CD14-positive monocyte (primary cell): ENCODE measurements at regions of chr5 and their contacts with region 1.

Region 1: GRCh38 chr5:173057062-173057924 is 1.1 kb downstream of the CREBRF start:
- DNase-seq: peak; percentile 98 to 99 (median 99)
- H3K4me3 ChIP-seq: peak overlapping the region; percentile 57 to 97 (median 96)
- H3K4me3 Mint-ChIP-seq: peak overlapping the region; percentile 90 to 94
- H3K27ac ChIP-seq: peak overlapping the region; percentile 83 to 95
- H3K27ac Mint-ChIP-seq: peak overlapping the region; percentile 93 to 98 (median 97)
- H3K4me1 ChIP-seq: peaks cover 21 to 26% of the 10 kb centered on the region in 2 donors
- H3K4me1 Mint-ChIP-seq: peaks cover 21% of the 10 kb centered on the region
- H3K27me3 ChIP-seq: no peaks in the 10 kb centered on the region
- H3K27me3 Mint-ChIP-seq: peaks cover 0 to 3% (median 0%) of the 10 kb centered on the region in 3 donors
- CTCF ChIP-seq: no peak

Region 2: DNA sequence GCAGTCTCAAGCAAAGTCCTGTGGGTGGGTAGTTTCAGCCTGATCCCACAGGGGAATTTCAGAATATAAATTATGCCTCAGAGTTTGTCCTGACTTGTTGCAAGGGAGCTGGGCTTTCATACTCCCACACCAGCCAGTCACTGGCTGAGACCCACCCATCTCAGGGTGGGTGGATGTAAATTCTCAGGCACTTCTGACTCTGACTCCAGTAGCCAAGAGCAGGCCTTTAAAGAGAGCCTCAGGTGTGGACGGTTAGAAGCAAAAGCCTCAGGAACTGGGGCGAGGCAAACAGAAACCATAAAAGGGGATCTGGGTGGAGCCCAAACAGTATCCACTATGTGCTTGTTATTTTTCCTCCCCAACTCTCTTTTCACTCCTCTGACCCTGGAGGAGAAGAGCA is 1022.3 kb before region 1 on chr5:
- intact Hi-C with region 1: no loop called
- DNase-seq: no peak
- H3K4me3 ChIP-seq: no peak overlapping the region
- H3K4me3 Mint-ChIP-seq: peak overlapping the region in 1 of 2 donors; percentile 12
- H3K27ac ChIP-seq: no peak overlapping the region
- H3K27ac Mint-ChIP-seq: no peak overlapping the region
- H3K4me1 ChIP-seq: peaks cover 7 to 8% of the 10 kb centered on the region in 2 donors
- H3K4me1 Mint-ChIP-seq: peaks cover 11% of the 10 kb centered on the region
- H3K27me3 ChIP-seq: no peaks in the 10 kb centered on the region
- H3K27me3 Mint-ChIP-seq: peaks cover 0 to 3% (median 2%) of the 10 kb centered on the region in 3 donors
- CTCF ChIP-seq: no peak

Region 3: GRCh38 chr5:172543484-172544298 is 513.6 kb before region 1 on chr5:
- intact Hi-C with region 1: no loop called
- DNase-seq: no peak
- H3K4me3 ChIP-seq: no peak overlapping the region
- H3K4me3 Mint-ChIP-seq: no peak overlapping the region
- H3K27ac ChIP-seq: no peak overlapping the region
- H3K27ac Mint-ChIP-seq: no peak overlapping the region
- H3K4me1 ChIP-seq: no peaks in the 10 kb centered on the region
- H3K4me1 Mint-ChIP-seq: no peaks in the 10 kb centered on the region
- H3K27me3 ChIP-seq: no peaks in the 10 kb centered on the region
- H3K27me3 Mint-ChIP-seq: peaks cover 1 to 8% (median 7%) of the 10 kb centered on the region in 3 donors
- CTCF ChIP-seq: no peak

Region 4: GRCh38 chr5:172886974-172887501 is 170.3 kb before region 1 on chr5:
- intact Hi-C with region 1: no loop called
- DNase-seq: peak; percentile 98 to 100 (median 100)
- H3K4me3 ChIP-seq: peak overlapping the region in 1 of 3 experiments; percentile 22
- H3K4me3 Mint-ChIP-seq: peak overlapping the region; percentile 67 to 73
- H3K27ac ChIP-seq: peak overlapping the region; percentile 98 to 100
- H3K27ac Mint-ChIP-seq: peak overlapping the region; percentile 99 to 100 (median 100)
- H3K4me1 ChIP-seq: peaks cover 53 to 54% of the 10 kb centered on the region in 2 donors
- H3K4me1 Mint-ChIP-seq: peaks cover 57% of the 10 kb centered on the region
- H3K27me3 ChIP-seq: no peaks in the 10 kb centered on the region
- H3K27me3 Mint-ChIP-seq: peaks cover 0 to 7% (median 2%) of the 10 kb centered on the region in 3 donors
- CTCF ChIP-seq: no peak

Region 5: DNA sequence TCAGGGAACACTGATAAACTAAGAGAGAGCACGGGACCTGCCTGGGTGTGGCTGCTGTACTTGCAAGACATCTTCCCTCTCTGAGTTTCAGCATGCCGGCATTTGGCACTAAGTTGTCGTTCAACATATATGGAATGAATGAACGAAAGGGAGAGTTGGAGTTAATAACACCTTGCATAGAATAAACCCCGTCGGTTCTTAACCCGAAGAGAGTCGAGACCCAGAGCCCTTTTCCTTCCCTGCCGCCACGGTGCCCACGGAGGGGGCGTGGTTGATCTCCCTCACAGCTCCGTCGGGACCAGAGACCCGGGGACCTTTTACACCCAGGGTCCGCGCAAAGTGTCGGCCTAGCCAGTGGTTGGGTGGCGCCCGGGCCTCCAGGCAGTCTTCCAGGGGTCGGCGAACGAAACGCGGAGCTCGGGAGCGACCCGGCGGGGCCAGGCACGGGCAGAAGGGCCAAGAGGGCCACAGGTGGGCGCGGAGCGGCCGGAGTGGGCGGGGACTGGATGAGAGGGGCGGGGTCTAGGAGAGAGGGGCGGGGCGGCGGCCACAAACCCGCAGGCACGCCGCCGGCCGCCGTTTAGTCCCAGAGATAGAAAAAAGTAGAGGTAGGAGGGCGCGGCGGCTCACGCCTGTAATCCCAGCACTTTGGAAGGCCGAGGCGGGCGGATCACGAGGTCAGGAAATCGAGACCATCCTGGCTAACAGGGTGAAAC is 98.8 kb before region 1 on chr5:
- intact Hi-C with region 1: loop called in 1 of 2 experiments (anchors 1 kb)
- DNase-seq: peak; percentile 46 to 61 (median 51)
- H3K4me3 ChIP-seq: peak overlapping the region; percentile 67 to 93 (median 85)
- H3K4me3 Mint-ChIP-seq: peak overlapping the region; percentile 83 to 97
- H3K27ac ChIP-seq: peak overlapping the region; percentile 82 to 92
- H3K27ac Mint-ChIP-seq: peak overlapping the region; percentile 93 to 98 (median 97)
- H3K4me1 ChIP-seq: peaks cover 16 to 24% of the 10 kb centered on the region in 2 donors
- H3K4me1 Mint-ChIP-seq: peaks cover 25% of the 10 kb centered on the region
- H3K27me3 ChIP-seq: no peaks in the 10 kb centered on the region
- H3K27me3 Mint-ChIP-seq: peaks cover 5 to 15% (median 6%) of the 10 kb centered on the region in 3 donors
- CTCF ChIP-seq: no peak

Region 6: DNA sequence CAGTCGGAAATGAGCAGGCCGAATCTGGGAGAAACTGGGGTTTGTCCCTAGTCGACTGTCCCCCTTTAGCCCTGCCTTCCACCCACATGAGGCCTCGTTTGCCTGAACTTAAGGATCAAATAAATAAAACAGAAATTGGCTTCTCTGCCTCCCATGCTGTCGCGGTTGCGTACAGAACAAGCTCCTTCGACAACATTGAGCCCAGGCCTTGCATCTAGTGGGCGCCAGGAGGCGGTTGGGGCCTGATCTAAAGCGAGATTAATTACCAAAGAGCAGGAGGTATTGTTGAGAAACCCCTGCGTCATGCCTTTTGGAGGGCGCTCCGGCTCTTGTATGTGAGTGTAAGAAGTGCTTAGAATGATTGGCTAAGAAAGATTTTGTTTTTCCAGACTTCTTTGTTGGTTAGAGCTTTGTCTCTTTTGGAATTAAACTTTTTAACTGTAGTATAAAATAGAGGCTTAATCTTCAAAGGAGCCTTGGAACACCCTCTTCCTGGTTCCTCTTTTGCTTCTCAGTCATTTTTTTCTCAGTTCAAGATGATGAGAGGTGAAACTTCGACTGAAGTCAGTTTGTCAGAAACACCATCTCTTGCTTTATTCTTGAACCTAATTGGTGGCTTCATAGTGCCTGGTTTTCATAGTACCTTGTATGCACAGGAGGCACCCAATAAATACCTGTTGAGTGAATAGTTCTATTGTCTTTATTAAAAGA is 72.9 kb before region 1 on chr5:
- intact Hi-C with region 1: loop called (anchors 2 to 5 kb)
- DNase-seq: peak; percentile 78 to 83 (median 82)
- H3K4me3 ChIP-seq: peak overlapping the region; percentile 67 to 97 (median 95)
- H3K4me3 Mint-ChIP-seq: peak overlapping the region; percentile 94 to 99
- H3K27ac ChIP-seq: peak overlapping the region; percentile 97 to 98
- H3K27ac Mint-ChIP-seq: peak overlapping the region; percentile 97 to 99 (median 99)
- H3K4me1 ChIP-seq: peaks cover 31 to 37% of the 10 kb centered on the region in 2 donors
- H3K4me1 Mint-ChIP-seq: peaks cover 39% of the 10 kb centered on the region
- H3K27me3 ChIP-seq: no peaks in the 10 kb centered on the region
- H3K27me3 Mint-ChIP-seq: no peaks in the 10 kb centered on the region
- CTCF ChIP-seq: peak; percentile 66

Region 7: DNA sequence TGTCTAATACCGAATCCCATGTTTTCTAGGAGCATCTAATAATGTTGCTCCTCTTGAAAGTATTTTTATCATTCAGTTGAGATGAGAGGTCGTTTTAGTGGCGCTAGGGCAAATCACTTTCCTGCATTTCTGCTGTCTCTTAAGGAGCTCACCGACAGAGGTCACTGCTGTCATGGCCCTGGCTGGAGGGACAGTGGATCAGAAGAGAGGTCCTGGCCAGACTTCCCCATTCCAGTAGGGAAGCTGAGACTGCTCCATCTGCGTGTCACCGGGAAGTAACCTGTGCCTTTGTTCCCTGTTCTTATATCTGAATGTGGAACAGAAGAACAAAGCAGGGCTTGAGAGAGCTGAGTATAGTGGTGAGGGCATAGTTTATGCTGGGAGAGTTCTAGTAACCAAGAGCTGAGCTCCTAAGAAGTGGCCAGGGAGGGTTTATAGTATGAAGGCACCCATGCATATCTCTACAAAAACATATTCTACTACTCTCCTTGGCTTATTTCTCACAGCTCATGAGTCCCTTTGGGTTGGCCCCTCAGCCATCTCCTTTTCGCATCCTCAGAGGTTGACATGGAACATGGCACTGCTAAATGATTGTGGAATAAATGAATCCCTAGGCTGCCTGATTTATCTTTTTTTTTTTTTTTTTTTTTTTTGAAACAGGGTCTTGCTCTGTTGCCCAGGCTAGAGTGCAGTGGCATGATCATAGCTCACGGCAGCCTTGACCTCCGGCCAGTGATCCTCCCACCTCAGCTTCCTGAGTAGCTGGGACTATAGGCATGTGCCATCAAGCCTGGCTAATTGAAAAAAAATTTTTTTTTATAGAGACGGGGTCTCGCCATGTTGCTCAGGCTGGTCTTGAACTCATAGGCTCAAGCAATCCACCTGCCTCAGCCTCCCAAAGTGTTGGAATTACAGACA is 46.5 kb before region 1 on chr5:
- intact Hi-C with region 1: loop called (anchors 5 kb)
- DNase-seq: peak; percentile 36 to 82 (median 69)
- H3K4me3 ChIP-seq: no peak overlapping the region
- H3K4me3 Mint-ChIP-seq: peak overlapping the region; percentile 8 to 33
- H3K27ac ChIP-seq: peak overlapping the region; percentile 55 to 92
- H3K27ac Mint-ChIP-seq: peak overlapping the region; percentile 64 to 92 (median 89)
- H3K4me1 ChIP-seq: peaks cover 76 to 82% of the 10 kb centered on the region in 2 donors
- H3K4me1 Mint-ChIP-seq: peaks cover 78% of the 10 kb centered on the region
- H3K27me3 ChIP-seq: no peaks in the 10 kb centered on the region
- H3K27me3 Mint-ChIP-seq: no peaks in the 10 kb centered on the region
- CTCF ChIP-seq: peak; percentile 66

Region 8: GRCh38 chr5:173035904-173036707 is 21.2 kb before region 1 on chr5:
- intact Hi-C with region 1: loop called in 1 of 2 experiments (anchors 2 kb)
- DNase-seq: peak; percentile 54 to 81 (median 77)
- H3K4me3 ChIP-seq: peak overlapping the region; percentile 22 to 65 (median 64)
- H3K4me3 Mint-ChIP-seq: peak overlapping the region; percentile 72 to 92
- H3K27ac ChIP-seq: peak overlapping the region; percentile 85 to 92
- H3K27ac Mint-ChIP-seq: peak overlapping the region; percentile 92 to 98 (median 96)
- H3K4me1 ChIP-seq: peaks cover 39 to 41% of the 10 kb centered on the region in 2 donors
- H3K4me1 Mint-ChIP-seq: peaks cover 48% of the 10 kb centered on the region
- H3K27me3 ChIP-seq: no peaks in the 10 kb centered on the region
- H3K27me3 Mint-ChIP-seq: no peaks in the 10 kb centered on the region
- CTCF ChIP-seq: no peak

Region 9: GRCh38 chr5:173123416-173123815 is 66.1 kb after region 1 on chr5:
- intact Hi-C with region 1: no loop called
- DNase-seq: no peak
- H3K4me3 ChIP-seq: no peak overlapping the region
- H3K4me3 Mint-ChIP-seq: no peak overlapping the region
- H3K27ac ChIP-seq: no peak overlapping the region
- H3K27ac Mint-ChIP-seq: peak overlapping the region in 2 of 7 donors; percentile 28 to 33
- H3K4me1 ChIP-seq: no peaks in the 10 kb centered on the region
- H3K4me1 Mint-ChIP-seq: no peaks in the 10 kb centered on the region
- H3K27me3 ChIP-seq: no peaks in the 10 kb centered on the region
- H3K27me3 Mint-ChIP-seq: no peaks in the 10 kb centered on the region
- CTCF ChIP-seq: no peak

Region 10: GRCh38 chr5:173144200-173145176 is 87.2 kb after region 1 on chr5 and contains the start of gene BNIP1:
- intact Hi-C with region 1: loop called in 1 of 2 experiments (anchors 2 kb)
- DNase-seq: peak; percentile 89 to 94 (median 94)
- H3K4me3 ChIP-seq: peak within 1 kb of the TSS; percentile 58 to 92 (median 89)
- H3K4me3 Mint-ChIP-seq: peak within 1 kb of the TSS; percentile 98 to 99
- H3K27ac ChIP-seq: peak within 1 kb of the TSS; percentile 88 to 93
- H3K27ac Mint-ChIP-seq: peak within 1 kb of the TSS; percentile 92 to 99 (median 96)
- H3K4me1 ChIP-seq: peaks cover 5 to 11% of the 10 kb centered on the region in 2 donors
- H3K4me1 Mint-ChIP-seq: peaks cover 4% of the 10 kb centered on the region
- H3K27me3 ChIP-seq: no peaks in the 10 kb centered on the region
- H3K27me3 Mint-ChIP-seq: peaks cover 0 to 4% (median 0%) of the 10 kb centered on the region in 3 donors
- CTCF ChIP-seq: peak; percentile 89
- polyA plus RNA-seq, gene BNIP1: 9.2 to 13.6 (median 9.8) TPM